Stomach (tissue), 19 donors: ENCODE measurements at regions of chr15 and their contacts with region 1.

Region 1: DNA sequence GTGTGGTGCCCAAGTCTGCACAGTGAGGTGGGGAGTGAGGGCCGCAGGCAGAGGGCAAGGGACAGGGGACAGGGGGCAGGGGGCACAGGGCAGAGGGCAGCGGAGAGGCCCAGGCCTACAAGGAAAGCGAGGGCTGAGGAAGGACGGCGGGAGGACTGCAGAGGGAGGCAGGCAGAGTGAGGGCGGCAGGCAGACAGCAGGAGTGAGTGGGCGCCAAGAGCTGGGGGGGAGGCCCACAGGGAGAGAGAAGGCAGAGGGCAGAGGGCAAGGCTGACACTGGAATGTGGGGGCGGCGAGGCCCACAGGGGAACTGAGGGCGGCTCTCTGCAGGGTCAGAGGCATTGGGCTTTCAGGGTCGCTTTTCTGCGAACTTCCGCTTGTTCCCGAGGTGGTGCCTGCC is 267.8 kb upstream of the NDN start:
- DNase-seq: no peak
- H3K4me3 ChIP-seq: no peak overlapping the region
- H3K27ac ChIP-seq: no peak overlapping the region
- H3K4me1 ChIP-seq: no peaks in the 10 kb centered on the region
- H3K27me3 ChIP-seq: no peaks in the 10 kb centered on the region
- CTCF ChIP-seq: no peak
- EP300 ChIP-seq: no peak
- POLR2A ChIP-seq: no peak

Region 2: GRCh38 chr15:23447107-23447500 is 507.8 kb before region 1 on chr15 and contains the start of gene GOLGA6L2:
- intact Hi-C with region 1: no loop called
- DNase-seq: no peak
- H3K4me3 ChIP-seq: no peak within 1 kb of the TSS
- H3K27ac ChIP-seq: no peak within 1 kb of the TSS
- H3K4me1 ChIP-seq: no peaks in the 10 kb centered on the region
- H3K27me3 ChIP-seq: peaks cover 0 to 9% (median 0%) of the 10 kb centered on the region in 3 donors
- CTCF ChIP-seq: no peak
- EP300 ChIP-seq: no peak
- POLR2A ChIP-seq: no peak
- total RNA-seq, gene GOLGA6L2: not detected

Region 3: GRCh38 chr15:23857028-23857641 is 97.8 kb before region 1 on chr15:
- intact Hi-C with region 1: no loop called
- DNase-seq: peak; percentile 56 to 74
- H3K4me3 ChIP-seq: no peak overlapping the region
- H3K27ac ChIP-seq: no peak overlapping the region
- H3K4me1 ChIP-seq: no peaks in the 10 kb centered on the region
- H3K27me3 ChIP-seq: peaks cover 0 to 17% (median 0%) of the 10 kb centered on the region in 3 donors
- CTCF ChIP-seq: peak in 4 of 7 experiments; percentile 19 to 53 (median 34)
- EP300 ChIP-seq: no peak
- POLR2A ChIP-seq: no peak

Region 4: DNA sequence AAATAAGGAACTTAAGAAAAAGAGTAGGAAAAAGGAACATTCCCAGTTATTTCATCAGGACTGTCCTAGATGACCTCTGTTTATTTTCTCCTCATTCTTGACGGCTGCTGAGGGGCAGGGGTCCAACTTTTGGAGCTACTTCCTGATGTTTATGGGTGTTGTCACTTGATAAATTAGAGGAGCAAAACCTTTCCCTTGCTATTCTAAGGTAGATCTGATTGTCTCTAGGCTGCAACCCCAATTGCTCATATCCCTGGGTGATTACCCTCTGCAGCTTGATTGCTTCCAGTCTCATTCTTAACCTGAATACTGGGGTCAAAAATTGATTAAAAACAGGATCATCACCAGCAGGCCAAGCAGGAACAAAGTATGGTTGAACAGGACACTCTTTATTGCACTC is 43.1 kb after region 1 on chr15:
- intact Hi-C with region 1: loop called (anchors 5 kb)
- DNase-seq: no peak
- H3K4me3 ChIP-seq: no peak overlapping the region
- H3K27ac ChIP-seq: no peak overlapping the region
- H3K4me1 ChIP-seq: no peaks in the 10 kb centered on the region
- H3K27me3 ChIP-seq: no peaks in the 10 kb centered on the region
- CTCF ChIP-seq: no peak
- EP300 ChIP-seq: no peak
- POLR2A ChIP-seq: no peak

Region 5: GRCh38 chr15:24008476-24008875 is 53.5 kb after region 1 on chr15:
- intact Hi-C with region 1: no loop called
- DNase-seq: no peak
- H3K4me3 ChIP-seq: no peak overlapping the region
- H3K27ac ChIP-seq: no peak overlapping the region
- H3K4me1 ChIP-seq: no peaks in the 10 kb centered on the region
- H3K27me3 ChIP-seq: no peaks in the 10 kb centered on the region
- CTCF ChIP-seq: no peak
- EP300 ChIP-seq: no peak
- POLR2A ChIP-seq: no peak

Region 6: DNA sequence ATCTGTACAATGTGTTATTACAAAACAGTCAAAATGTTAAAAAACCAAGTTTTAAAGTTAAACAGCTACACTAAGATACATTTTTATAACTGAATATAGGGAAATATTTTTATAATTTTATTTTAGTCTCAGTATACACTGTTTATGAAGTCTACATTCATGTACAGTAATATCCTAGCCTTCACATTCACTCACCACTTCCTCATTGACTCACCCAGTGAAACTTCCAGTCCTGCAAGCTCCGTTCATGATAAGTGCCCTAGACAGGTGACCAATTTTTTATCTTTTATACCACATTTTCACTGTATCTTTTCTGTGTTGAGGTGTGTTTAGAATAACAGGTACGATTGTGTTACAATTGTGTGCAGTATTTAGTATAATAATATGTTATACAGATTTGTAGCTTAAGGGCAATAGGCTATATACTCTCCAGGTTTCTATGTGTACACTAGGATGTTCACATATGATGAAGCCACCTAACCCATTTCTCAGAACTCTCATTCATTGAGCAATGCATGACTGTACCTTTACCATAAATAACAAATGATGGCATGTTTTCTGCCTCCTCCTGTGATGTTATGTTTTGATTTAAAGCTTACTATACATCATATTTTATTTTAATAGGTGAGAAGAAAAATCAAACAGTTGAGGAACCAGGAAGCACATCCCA is 120.6 kb after region 1 on chr15:
- intact Hi-C with region 1: no loop called
- DNase-seq: peak in 1 of 2 donors; percentile 17
- H3K4me3 ChIP-seq: no peak overlapping the region
- H3K27ac ChIP-seq: no peak overlapping the region
- H3K4me1 ChIP-seq: no peaks in the 10 kb centered on the region
- H3K27me3 ChIP-seq: no peaks in the 10 kb centered on the region
- CTCF ChIP-seq: no peak
- EP300 ChIP-seq: no peak
- POLR2A ChIP-seq: no peak